Upper lobe of right lung (tissue), 1 donor: ENCODE measurements at regions of chr6 and their contacts with region 1.

Region 1: DNA sequence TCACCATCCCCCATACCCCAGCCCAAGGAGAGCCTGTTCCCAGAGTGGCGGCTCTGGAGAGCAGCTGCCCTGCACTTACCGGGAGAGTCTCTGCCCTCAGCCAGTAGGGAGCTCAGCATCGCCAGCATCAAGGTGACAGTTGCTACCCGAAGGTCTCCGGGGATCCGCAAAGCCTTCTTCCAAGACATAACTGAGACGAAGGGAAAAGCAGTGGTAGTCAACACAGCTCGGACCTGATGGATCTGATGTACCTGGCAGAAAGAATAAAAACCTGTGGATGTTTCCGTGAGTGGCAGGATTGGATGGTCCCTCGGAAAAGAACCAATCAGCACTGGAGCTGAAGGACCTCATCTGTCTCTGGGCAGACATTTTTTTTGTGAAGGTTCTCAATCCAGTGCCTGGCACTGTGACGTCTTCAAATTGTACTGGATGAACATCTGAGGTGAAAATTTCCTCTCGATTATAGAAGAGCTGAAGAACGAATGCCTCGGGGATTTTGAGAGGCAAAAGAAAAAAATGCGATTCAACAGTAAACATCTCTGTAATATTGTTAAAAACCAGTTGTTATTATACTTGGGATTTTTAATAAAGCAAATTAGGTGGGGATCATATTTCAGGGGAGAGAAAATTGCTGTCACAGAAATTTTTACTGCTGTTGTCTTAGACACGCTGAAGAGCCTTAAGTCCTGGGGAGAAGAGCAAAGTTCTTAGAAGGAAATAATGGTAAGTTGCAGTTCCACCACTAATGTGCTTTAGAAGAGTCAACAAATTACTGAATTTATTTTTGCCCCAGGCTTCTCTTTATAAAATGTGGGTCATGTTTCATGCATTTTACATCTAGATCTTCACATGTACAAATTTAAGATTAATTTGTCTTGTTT is at the start of gene HLA-DQB1:
- DNase-seq: no peak
- ATAC-seq: peak; percentile 83
- H3K4me3 ChIP-seq: no peak within 1 kb of the TSS
- H3K27ac ChIP-seq: no peak within 1 kb of the TSS
- H3K4me1 ChIP-seq: no peaks in the 10 kb centered on the region
- H3K27me3 ChIP-seq: no peaks in the 10 kb centered on the region
- CTCF ChIP-seq: no peak
- total RNA-seq, gene HLA-DQB1: 94.9 TPM

Region 2: DNA sequence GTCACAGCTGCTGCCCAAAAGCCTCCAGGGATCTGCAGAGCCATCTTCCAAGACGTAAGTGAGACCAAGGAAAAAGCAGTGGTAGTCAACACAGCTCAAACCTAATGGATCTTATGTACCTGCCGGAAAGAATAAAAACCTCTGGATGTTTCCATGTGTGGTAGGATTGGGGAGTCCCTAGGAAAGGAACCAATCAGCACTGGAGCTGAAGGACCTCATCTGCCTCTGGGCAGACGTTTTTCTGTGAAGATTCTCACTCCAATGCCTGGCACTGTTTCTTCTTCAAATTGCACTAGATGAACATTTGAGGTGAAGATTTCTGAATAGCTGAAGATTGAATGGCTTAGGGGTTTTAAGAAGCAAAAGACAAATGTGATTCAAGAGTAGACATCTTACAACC is 96.8 kb after region 1 on chr6 and contains the start of gene HLA-DQB2:
- intact Hi-C with region 1: loop called (anchors 10 kb)
- DNase-seq: no peak
- ATAC-seq: no peak
- H3K4me3 ChIP-seq: no peak within 1 kb of the TSS
- H3K27ac ChIP-seq: no peak within 1 kb of the TSS
- H3K4me1 ChIP-seq: peaks cover 6% of the 10 kb centered on the region
- H3K27me3 ChIP-seq: no peaks in the 10 kb centered on the region
- CTCF ChIP-seq: no peak
- total RNA-seq, gene HLA-DQB2: 62.8 TPM

Region 3: GRCh38 chr6:32952817-32953739 is 286.4 kb after region 1 on chr6 and contains the start of gene HLA-DMA:
- intact Hi-C with region 1: no loop called
- DNase-seq: peak; percentile 91
- ATAC-seq: peak; percentile 98
- H3K4me3 ChIP-seq: peak within 1 kb of the TSS; percentile 59
- H3K27ac ChIP-seq: peak within 1 kb of the TSS; percentile 90
- H3K4me1 ChIP-seq: peaks cover 8% of the 10 kb centered on the region
- H3K27me3 ChIP-seq: no peaks in the 10 kb centered on the region
- CTCF ChIP-seq: peak; percentile 89
- total RNA-seq, gene HLA-DMA: 197 TPM